Heart left ventricle (tissue), 16 donors: ENCODE measurements at regions of chr2 and their contacts with region 1.

Region 1: DNA sequence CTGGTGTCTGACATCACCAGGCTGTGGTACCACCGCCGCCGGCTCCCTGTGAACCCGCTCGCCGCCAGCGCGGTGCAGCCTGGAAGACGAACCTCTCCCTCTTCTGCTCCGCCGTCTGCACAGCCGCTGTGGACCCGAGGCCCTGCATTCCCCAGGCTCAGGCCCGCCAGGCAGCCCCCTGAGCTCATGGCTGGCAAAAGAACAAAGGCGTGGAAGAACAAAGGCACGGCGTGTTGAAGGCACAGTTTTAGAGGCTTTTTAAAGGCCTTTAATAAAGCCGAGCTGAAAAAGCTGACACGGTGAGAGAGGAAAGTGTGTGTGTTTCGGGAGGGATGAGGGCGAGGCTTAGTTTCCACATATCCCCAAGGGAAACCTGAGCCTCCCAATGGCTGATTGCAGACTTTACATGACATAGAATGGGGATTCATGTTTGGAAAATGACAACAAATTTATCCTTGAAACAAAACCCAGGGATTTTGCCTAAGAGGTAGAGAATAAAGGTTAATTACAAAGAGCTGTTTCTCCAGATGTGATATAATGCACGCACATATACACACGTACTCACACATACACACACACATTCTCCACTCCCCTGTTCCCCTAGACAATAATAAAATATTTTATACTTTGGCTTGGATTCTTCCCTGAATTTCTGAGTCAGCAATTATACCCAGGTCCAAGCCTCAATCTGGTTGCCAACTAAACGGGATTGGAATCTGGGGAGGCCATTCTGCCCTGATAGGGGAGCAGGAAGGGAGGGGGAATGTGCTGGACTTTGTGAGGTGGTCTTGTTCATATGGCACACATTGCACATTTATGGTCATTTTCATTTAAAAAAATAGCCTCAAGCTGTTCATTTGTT is 39.7 kb downstream of the RFX8 start:
- DNase-seq: peak in 2 of 5 donors; percentile 49 to 51
- ATAC-seq: peak; percentile 33 to 56 (median 52)
- H3K4me3 ChIP-seq: peak overlapping the region in 9 of 12 donors; percentile 4 to 43 (median 27)
- H3K27ac ChIP-seq: peak overlapping the region in 5 of 12 donors; percentile 3 to 47 (median 11)
- H3K4me1 ChIP-seq: peaks cover 0 to 28% (median 6%) of the 10 kb centered on the region in 12 donors
- H3K27me3 ChIP-seq: no peaks in the 10 kb centered on the region
- CTCF ChIP-seq: no peak
- POLR2A ChIP-seq: no peak

Region 2: DNA sequence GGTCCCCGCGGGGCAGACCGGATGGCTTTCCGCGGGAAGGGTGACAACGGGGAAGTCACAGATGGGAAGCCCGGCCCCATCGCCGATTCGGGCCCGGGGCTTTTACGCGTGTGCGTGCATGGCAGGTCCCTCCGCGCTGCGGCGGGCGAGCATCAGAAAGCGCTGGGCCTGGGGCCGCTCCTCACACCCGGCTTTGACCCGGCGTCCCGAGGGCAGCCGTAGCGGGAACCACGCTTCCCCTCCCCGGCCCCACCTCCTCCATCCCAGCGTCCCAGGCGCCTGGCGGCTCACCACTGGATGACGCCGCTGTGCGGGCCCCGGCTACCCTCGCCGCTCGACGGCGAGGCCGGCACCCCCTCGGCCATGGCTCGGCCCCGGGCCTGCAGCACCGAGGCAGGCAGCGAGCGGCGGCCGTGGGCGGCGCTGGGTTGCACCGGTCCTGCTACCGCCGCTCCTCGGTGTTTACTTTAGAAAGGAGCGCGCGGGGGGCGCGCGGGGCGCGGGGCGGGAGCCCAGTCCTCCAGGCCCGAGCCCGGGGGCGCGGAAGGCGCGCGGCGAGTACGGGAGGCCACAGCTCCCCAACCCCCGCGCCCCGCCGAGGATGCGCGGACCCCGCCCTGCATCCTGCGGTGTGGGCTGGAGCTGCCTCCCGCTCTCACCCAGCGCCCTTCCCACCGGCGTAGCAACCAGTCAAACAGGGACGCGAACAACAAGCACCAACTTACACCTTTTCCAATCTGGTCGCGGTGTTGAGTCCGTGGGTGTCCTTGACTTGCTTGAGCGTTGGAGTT is 38.9 kb after region 1 on chr2:
- intact Hi-C with region 1: loop called in 1 of 10 experiments (anchors 5 kb)
- DNase-seq: peak; percentile 62 to 85 (median 74)
- ATAC-seq: peak; percentile 71 to 93 (median 90)
- H3K4me3 ChIP-seq: peak overlapping the region; percentile 32 to 87 (median 62)
- H3K27ac ChIP-seq: peak overlapping the region; percentile 52 to 92 (median 78)
- H3K4me1 ChIP-seq: peaks cover 0 to 34% (median 9%) of the 10 kb centered on the region in 12 donors
- H3K27me3 ChIP-seq: peaks cover 0 to 64% (median 0%) of the 10 kb centered on the region in 9 donors
- CTCF ChIP-seq: peak in 2 of 12 donors; percentile 10 to 13
- POLR2A ChIP-seq: no peak

Region 3: GRCh38 chr2:102258386-102259074 is 823.3 kb after region 1 on chr2:
- intact Hi-C with region 1: no loop called
- DNase-seq: no peak
- ATAC-seq: peak in 2 of 4 donors; percentile 54 to 65
- H3K4me3 ChIP-seq: no peak overlapping the region
- H3K27ac ChIP-seq: peak overlapping the region in 1 of 12 donors; percentile 17
- H3K4me1 ChIP-seq: peaks cover 0 to 43% (median 0%) of the 10 kb centered on the region in 12 donors
- H3K27me3 ChIP-seq: peaks cover 0 to 4% (median 0%) of the 10 kb centered on the region in 9 donors
- CTCF ChIP-seq: no peak
- POLR2A ChIP-seq: no peak